Vagina (tissue), 2 donors: ENCODE measurements at regions of chr16 and their contacts with region 1.

Region 1: DNA sequence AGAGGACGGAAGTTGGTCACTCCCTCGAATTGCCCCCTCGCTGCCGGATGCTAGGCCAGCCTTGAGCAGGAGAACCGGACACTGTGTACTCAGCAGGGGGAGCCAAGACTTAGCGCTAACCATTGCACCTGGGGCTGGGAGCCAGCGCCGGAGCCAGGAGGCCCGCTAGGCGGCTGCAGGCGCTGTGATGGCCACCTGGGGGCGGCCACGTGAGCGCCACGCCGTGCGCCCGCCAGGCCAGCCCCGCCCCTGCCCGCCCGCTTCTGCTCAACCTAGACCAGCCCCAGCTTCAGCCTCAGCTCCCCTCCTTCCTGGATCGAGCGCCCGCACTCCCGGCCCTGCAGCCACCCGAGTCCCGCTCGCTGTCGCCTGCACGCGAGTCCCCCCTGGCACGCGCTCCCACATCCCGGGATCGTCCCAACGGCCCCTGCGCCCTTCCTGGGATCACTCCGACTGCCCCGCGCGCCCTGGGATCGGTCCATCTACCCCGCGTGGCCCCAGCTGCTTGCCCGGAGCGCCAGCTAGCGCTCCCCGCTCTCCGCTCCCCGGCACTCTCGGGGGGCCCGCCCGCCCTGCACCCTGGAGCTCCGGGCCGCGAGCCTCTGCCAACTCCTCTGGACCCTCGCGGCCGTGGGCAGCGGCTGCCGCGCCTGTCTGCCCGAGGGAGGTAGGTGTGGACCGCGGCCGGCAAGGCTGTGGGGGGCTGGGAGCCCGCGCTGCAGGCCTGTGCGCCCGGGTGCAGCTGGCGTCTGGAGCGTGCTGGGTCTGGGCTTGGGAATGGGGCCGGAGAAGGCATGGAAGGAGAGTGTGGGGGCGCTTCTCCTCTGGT is at the start of gene EEF2K:
- DNase-seq: peak in 1 of 2 donors; percentile 96
- H3K4me3 ChIP-seq: peak within 1 kb of the TSS; percentile 78 to 88
- H3K27ac ChIP-seq: peak within 1 kb of the TSS; percentile 83
- H3K4me1 ChIP-seq: peaks cover 54% of the 10 kb centered on the region
- H3K27me3 ChIP-seq: no peaks in the 10 kb centered on the region
- CTCF ChIP-seq: peak; percentile 23 to 90 (median 83)
- POLR2A ChIP-seq: no peak
- total RNA-seq, gene EEF2K: 50.3 TPM

Region 2: DNA sequence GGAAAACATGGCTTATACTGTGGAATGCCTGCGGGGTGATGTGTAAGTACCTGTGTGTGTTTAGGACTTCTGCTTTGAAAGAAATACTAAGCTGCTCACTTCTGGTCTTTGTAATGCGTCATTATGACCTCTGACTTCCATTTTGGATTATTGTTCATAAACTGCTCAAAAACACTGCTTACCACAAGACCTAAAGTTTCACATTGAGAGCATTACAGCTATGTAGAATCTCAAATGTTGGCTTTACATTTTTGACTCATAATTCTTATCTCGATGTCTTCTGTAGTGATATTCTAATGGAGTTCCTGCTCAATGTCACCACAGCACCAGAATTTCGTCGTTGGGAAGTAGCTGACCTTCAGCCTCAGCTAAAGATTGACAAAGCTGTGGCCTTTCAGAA is 243.8 kb before region 1 on chr16:
- intact Hi-C with region 1: no loop called
- DNase-seq: no peak
- H3K4me3 ChIP-seq: no peak overlapping the region
- H3K27ac ChIP-seq: no peak overlapping the region
- H3K4me1 ChIP-seq: no peaks in the 10 kb centered on the region
- H3K27me3 ChIP-seq: no peaks in the 10 kb centered on the region
- CTCF ChIP-seq: no peak
- POLR2A ChIP-seq: no peak

Region 3: DNA sequence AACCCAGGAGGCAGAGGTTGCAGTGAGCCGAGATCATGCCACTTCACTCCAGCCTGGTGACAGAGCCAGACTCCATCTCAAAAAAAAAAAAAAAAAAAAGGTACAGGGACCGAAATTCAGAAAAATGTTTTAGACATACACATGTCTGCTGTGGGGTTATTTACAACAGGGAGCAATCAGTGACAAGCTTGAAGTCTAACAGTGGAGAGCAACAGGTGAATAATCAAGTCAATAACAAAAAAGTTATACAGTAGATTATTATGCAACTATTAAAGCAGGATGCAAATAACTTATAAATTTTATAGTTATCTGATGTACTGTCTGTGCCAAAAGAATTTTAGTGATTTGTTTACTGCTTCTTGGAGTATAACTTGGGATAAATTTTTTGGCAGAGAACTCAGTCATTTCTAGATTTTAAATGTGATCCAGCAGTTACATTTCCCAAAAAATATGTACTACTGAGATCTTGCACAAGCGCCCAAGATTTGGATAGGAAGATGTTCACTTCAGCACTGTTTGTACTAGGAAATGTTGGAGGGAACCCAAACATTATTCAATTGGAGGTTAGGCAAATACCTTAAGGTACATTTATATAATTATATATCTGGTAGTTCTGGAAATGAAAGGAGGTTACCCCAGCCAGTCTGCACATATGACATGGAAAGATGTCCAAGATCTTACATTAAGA is 33.9 kb after region 1 on chr16:
- intact Hi-C with region 1: loop called (anchors 5 kb)
- DNase-seq: no peak
- H3K4me3 ChIP-seq: no peak overlapping the region
- H3K27ac ChIP-seq: peak overlapping the region; percentile 58
- H3K4me1 ChIP-seq: peaks cover 41% of the 10 kb centered on the region
- H3K27me3 ChIP-seq: no peaks in the 10 kb centered on the region
- CTCF ChIP-seq: no peak
- POLR2A ChIP-seq: no peak

Region 4: GRCh38 chr16:22374311-22375116 is 168.3 kb after region 1 on chr16 and contains the start of gene CDR2:
- intact Hi-C with region 1: loop called (anchors 10 kb)
- DNase-seq: peak; percentile 98 to 99
- H3K4me3 ChIP-seq: peak within 1 kb of the TSS; percentile 85 to 98
- H3K27ac ChIP-seq: peak within 1 kb of the TSS; percentile 89
- H3K4me1 ChIP-seq: peaks cover 48% of the 10 kb centered on the region
- H3K27me3 ChIP-seq: no peaks in the 10 kb centered on the region
- CTCF ChIP-seq: no peak
- POLR2A ChIP-seq: peak in 1 of 2 donors; percentile 94
- total RNA-seq, gene CDR2: 33.9 TPM